ENCODE measurements at regions of chr1 and their contacts with region 1.

Region 1: GRCh38 chr1:19485362-19486187 is at the start of gene CAPZB:
- DNase-seq: peak; percentile 97
- H3K4me3 ChIP-seq: peak within 1 kb of the TSS; percentile 83 to 100 (median 94)
- H3K27ac ChIP-seq: peak within 1 kb of the TSS; percentile 99 to 100 (median 100)
- H3K4me1 ChIP-seq: peaks cover 0 to 64% (median 57%) of the 10 kb centered on the region in 4 donors
- H3K27me3 ChIP-seq: no peaks in the 10 kb centered on the region
- CTCF ChIP-seq: no peak
- EP300 ChIP-seq: no peak
- POLR2A ChIP-seq: peak; percentile 71 to 78
- total RNA-seq, gene CAPZB: 128 to 214 (median 145) TPM

Region 2: DNA sequence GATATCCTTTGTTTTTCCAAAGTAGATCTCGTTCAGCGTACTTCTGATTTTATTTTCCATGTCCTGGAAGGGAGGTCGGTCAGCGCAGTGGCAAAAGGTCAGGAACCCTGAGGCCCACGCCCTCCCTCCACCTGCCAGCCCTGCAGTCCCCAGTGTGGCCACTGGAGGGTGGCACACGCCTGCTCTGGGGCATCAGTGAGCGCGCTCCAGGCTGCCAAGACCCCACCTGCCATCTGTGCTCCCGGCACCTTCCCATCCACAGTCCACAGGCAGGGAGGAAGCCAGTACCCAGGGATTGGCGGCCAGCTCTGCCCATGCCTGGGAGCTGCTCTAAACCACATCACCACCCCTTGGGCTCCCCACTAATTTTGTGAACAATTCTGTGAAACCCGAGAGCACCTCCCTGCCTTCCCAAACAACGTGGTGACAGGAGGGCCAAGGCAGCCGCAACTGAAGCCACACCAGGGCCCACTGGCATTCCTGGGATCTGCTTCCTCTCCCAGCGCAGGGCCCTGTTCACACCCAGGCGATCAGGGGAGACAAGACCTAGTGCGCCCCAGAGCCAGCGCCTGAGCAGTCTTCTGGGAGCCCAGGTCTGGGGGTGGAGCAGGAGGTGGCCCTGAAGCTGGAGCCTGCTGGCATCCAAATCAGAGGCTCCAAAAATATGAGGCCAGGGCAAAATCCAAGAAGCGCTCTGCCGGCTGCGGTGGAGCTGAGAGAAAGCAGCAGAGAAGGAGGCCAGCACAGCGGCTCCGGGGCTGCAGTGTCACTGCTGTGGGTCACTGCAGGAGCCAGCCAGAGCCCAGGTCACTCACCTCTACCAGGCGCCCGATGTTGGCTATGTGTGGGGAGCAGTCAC is 141.0 kb before region 1 on chr1:
- intact Hi-C with region 1: loop called (anchors 2 kb)
- DNase-seq: peak; percentile 84
- H3K4me3 ChIP-seq: no peak overlapping the region
- H3K27ac ChIP-seq: peak overlapping the region in 1 of 4 donors; percentile 26
- H3K4me1 ChIP-seq: peaks cover 0 to 39% (median 27%) of the 10 kb centered on the region in 4 donors
- H3K27me3 ChIP-seq: no peaks in the 10 kb centered on the region
- CTCF ChIP-seq: peak; percentile 83 to 94 (median 90)
- EP300 ChIP-seq: no peak
- POLR2A ChIP-seq: no peak

Region 3: GRCh38 chr1:19390901-19391595 is 94.5 kb before region 1 on chr1:
- intact Hi-C with region 1: loop called (anchors 2 kb)
- DNase-seq: peak; percentile 87
- H3K4me3 ChIP-seq: peak overlapping the region in 1 of 4 donors; percentile 12
- H3K27ac ChIP-seq: peak overlapping the region; percentile 71 to 98 (median 82)
- H3K4me1 ChIP-seq: peaks cover 0 to 83% (median 76%) of the 10 kb centered on the region in 4 donors
- H3K27me3 ChIP-seq: no peaks in the 10 kb centered on the region
- CTCF ChIP-seq: peak; percentile 70 to 88 (median 84)
- EP300 ChIP-seq: no peak
- POLR2A ChIP-seq: no peak

Region 4: DNA sequence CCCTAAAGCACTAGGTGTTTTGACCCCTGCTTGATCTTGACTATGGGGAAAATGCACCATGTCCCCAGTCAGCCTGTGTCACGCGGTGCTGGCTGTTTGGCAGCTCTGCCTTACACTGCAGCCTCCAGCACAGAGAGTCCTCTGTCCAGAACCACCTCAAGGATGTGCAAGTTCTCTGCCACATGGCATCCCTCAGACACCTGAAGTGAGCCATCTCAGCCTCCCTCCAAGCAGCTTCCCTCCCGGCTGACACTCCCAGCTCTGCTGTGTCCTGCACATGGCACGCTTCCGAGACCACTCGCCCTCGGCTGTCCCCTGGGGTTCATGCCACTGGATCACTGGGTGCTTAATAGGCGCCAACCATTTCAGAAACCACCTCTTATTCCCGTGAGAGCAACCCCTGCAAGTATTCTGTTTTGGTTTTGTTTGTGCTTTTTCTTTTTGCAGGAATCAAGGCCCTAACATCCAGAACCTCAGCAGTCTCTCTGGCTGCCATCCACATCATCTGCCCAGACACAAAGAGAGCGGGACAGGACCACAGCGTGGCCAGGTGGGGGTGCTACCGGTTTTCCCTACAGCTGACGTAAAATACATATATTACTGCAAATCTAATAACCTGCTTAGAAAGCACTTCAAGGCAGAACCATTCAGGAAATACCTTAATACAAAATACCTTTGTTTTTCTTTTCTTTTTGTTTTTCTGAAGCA is 46.0 kb before region 1 on chr1:
- intact Hi-C with region 1: loop called (anchors 5 kb)
- DNase-seq: peak; percentile 87
- H3K4me3 ChIP-seq: no peak overlapping the region
- H3K27ac ChIP-seq: peak overlapping the region; percentile 85 to 98 (median 91)
- H3K4me1 ChIP-seq: peaks cover 5 to 100% (median 100%) of the 10 kb centered on the region in 4 donors
- H3K27me3 ChIP-seq: no peaks in the 10 kb centered on the region
- CTCF ChIP-seq: peak in 2 of 4 experiments; percentile 32 to 36
- EP300 ChIP-seq: peak in 3 of 4 donors; percentile 31 to 82 (median 66)
- POLR2A ChIP-seq: no peak

Region 5: GRCh38 chr1:19596714-19597495 is 111.3 kb after region 1 on chr1:
- intact Hi-C with region 1: loop called (anchors 2 kb)
- DNase-seq: peak; percentile 99
- H3K4me3 ChIP-seq: peak overlapping the region; percentile 64 to 95 (median 94)
- H3K27ac ChIP-seq: peak overlapping the region; percentile 89 to 98 (median 98)
- H3K4me1 ChIP-seq: peaks cover 0 to 52% (median 38%) of the 10 kb centered on the region in 4 donors
- H3K27me3 ChIP-seq: no peaks in the 10 kb centered on the region
- CTCF ChIP-seq: no peak
- EP300 ChIP-seq: no peak
- POLR2A ChIP-seq: peak; percentile 76 to 88

Region 6: DNA sequence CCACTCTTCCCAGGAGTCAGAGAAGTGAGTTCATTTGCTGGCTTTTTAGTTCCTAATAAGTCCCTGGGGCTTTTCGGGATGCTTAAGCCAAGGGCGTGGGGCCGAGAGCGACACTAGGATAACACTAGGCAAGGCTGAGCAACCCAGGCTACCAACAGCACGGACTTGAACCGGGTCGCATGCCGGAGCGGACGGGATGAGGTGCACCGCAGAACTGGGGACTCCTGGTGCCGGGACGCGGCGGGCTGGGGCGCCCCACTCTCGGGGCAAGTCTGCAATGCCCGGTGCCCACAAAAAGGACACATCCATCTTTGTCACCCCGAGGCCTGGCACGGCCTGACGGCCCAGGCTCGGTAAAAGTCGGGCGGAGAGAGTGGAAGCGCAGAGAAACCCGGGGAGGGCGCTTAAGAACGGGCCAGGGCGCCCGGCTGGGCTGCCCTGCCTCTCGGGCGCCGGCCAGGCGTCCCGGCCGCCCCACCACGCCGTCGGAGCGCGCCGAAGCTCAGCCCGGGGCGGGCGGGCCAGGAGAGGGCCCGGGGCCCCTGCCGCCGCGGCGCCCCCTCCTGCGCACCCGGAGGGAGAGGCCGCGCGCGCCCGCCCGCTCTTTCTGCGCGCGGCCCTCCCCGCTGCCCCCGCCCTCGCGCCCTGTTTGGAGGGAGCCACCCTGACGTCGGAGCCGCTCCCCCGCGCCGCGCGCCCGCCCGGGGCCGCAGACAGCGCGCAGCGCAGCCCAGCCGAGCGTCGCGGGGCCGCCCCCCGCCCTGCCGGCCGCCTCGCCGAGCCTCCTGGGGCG is 158.2 kb after region 1 on chr1 and contains the start of gene NBL1:
- intact Hi-C with region 1: loop called (anchors 2 kb)
- DNase-seq: peak; percentile 90
- H3K4me3 ChIP-seq: peak within 1 kb of the TSS; percentile 75 to 89 (median 84)
- H3K27ac ChIP-seq: peak within 1 kb of the TSS; percentile 93 to 97 (median 94)
- H3K4me1 ChIP-seq: peaks cover 0 to 50% (median 39%) of the 10 kb centered on the region in 4 donors
- H3K27me3 ChIP-seq: no peaks in the 10 kb centered on the region
- CTCF ChIP-seq: no peak
- EP300 ChIP-seq: no peak
- POLR2A ChIP-seq: no peak
- total RNA-seq, gene NBL1: 64.1 to 128 (median 87.6) TPM

Measured in sigmoid colon (tissue), 7 donors.